Breast epithelium (tissue), 4 donors: ENCODE measurements at regions of chr13 and their contacts with region 1.

Region 1: GRCh38 chr13:112424098-112424497 is 47.9 kb downstream of the SPACA7 start:
- DNase-seq: no peak
- H3K4me3 ChIP-seq: no peak overlapping the region
- H3K27ac ChIP-seq: no peak overlapping the region
- H3K4me1 ChIP-seq: no peaks in the 10 kb centered on the region
- H3K27me3 ChIP-seq: no peaks in the 10 kb centered on the region
- CTCF ChIP-seq: no peak
- POLR2A ChIP-seq: no peak

Region 2: DNA sequence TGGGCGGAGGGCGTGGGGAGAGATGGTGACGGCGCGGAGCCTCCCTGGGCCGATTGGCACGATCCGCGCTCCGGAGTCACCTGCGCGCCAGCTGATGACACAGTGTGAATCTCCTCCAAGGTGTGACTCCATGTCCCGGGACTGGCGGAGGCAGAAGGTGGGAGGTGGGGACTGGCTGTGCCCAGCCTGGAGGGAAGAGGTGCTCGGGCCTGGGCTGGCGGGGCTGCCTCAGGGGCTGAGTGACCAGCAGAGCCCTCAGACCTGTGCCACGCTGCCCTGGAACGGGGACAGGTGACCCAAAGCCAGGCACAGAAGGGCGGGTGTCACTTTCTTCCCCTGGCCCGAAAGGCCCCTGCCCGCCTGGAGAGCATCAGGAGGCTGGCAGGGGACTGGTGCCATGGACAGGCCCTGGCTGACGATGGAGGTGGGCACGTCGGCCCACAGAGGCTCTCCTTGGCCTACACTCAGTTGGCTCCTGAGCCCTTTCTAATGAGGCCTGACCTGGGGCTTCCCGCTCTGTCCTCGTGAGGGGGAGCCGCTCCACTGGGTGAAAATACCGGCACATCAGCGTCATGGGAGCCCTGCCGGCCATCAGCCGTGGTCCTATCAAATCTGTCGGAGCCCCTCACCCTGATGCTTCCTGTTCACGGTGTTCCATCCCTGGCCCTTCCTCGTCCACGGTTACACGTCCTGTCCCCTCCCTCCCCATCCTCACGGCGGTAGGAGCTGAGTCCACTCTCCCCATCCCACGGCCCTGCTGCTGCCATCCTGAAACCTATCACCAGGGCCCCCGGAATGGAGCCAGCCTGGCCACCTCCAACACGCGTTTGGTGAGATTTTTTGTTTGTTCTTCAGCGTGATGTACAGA is 27.6 kb after region 1 on chr13:
- intact Hi-C with region 1: loop called (anchors 2 kb)
- DNase-seq: no peak
- H3K4me3 ChIP-seq: no peak overlapping the region
- H3K27ac ChIP-seq: no peak overlapping the region
- H3K4me1 ChIP-seq: no peaks in the 10 kb centered on the region
- H3K27me3 ChIP-seq: peaks cover 0 to 39% of the 10 kb centered on the region in 2 donors
- CTCF ChIP-seq: no peak
- POLR2A ChIP-seq: no peak

Region 3: DNA sequence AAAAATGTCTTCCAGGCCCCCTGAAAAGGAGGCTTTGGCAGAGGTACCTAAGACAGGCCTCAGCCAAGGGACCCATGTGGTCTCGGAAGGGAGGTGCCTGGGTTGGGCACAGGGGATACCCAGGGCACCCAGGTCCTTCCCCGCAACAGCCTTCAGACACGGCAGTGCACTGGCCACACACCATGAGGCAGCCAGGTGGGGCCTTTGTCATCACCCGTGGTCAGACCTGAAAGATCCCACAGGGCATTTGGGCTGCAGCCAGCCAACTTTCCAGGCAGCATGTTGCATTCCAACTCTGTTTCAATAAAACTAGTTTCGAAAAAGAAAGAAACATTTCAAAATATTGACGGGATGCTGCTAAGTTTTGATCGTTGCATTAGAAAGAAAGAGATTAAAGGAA is 168.5 kb after region 1 on chr13:
- intact Hi-C with region 1: loop called (anchors 5 kb)
- DNase-seq: no peak
- H3K4me3 ChIP-seq: no peak overlapping the region
- H3K27ac ChIP-seq: no peak overlapping the region
- H3K4me1 ChIP-seq: no peaks in the 10 kb centered on the region
- H3K27me3 ChIP-seq: no peaks in the 10 kb centered on the region
- CTCF ChIP-seq: no peak
- POLR2A ChIP-seq: no peak

Region 4: GRCh38 chr13:113001241-113002140 is 577.4 kb after region 1 on chr13:
- intact Hi-C with region 1: no loop called
- DNase-seq: peak in 1 of 2 donors; percentile 67
- H3K4me3 ChIP-seq: peak overlapping the region in 2 of 3 donors; percentile 47 to 69
- H3K27ac ChIP-seq: peak overlapping the region; percentile 13 to 43
- H3K4me1 ChIP-seq: no peaks in the 10 kb centered on the region
- H3K27me3 ChIP-seq: no peaks in the 10 kb centered on the region
- CTCF ChIP-seq: no peak
- POLR2A ChIP-seq: no peak